Naive thymus-derived CD4-positive, alpha-beta T cell (primary cell): ENCODE measurements at regions of chr6 and their contacts with region 1.

Region 1: GRCh38 chr6:52995913-52996645 is 995 bp upstream of the GSTA4 start:
- DNase-seq: peak in 5 of 9 donors; percentile 21 to 43 (median 35)
- ATAC-seq: no peak
- H3K4me3 ChIP-seq: peak overlapping the region; percentile 83
- H3K4me3 Mint-ChIP-seq: peak overlapping the region; percentile 87 to 98 (median 94)
- H3K27ac ChIP-seq: peak overlapping the region; percentile 43
- H3K27ac Mint-ChIP-seq: peak overlapping the region; percentile 97 to 100 (median 99)
- H3K4me1 ChIP-seq: peaks cover 4 to 5% of the 10 kb centered on the region in 2 donors
- H3K4me1 Mint-ChIP-seq: peaks cover 10 to 37% (median 29%) of the 10 kb centered on the region in 7 donors
- H3K27me3 ChIP-seq: no peaks in the 10 kb centered on the region
- H3K27me3 Mint-ChIP-seq: peaks cover 0 to 10% (median 0%) of the 10 kb centered on the region in 5 donors

Region 2: GRCh38 chr6:51213811-51214210 is 1782.3 kb before region 1 on chr6:
- CTCF ChIA-PET with region 1: no interaction called
- POLR2A ChIA-PET with region 1: no interaction called
- intact Hi-C with region 1: no loop called
- DNase-seq: no peak
- ATAC-seq: no peak
- H3K4me3 ChIP-seq: no peak overlapping the region
- H3K4me3 Mint-ChIP-seq: no peak overlapping the region
- H3K27ac ChIP-seq: no peak overlapping the region
- H3K27ac Mint-ChIP-seq: no peak overlapping the region
- H3K4me1 ChIP-seq: no peaks in the 10 kb centered on the region
- H3K4me1 Mint-ChIP-seq: no peaks in the 10 kb centered on the region
- H3K27me3 ChIP-seq: no peaks in the 10 kb centered on the region
- H3K27me3 Mint-ChIP-seq: no peaks in the 10 kb centered on the region

Region 3: GRCh38 chr6:52399511-52400312 is 596.4 kb before region 1 on chr6:
- CTCF ChIA-PET with region 1: no interaction called
- POLR2A ChIA-PET with region 1: no interaction called
- intact Hi-C with region 1: loop called (anchors 5 to 10 kb)
- DNase-seq: peak in 7 of 9 donors; percentile 21 to 60 (median 48)
- ATAC-seq: peak; percentile 58
- H3K4me3 ChIP-seq: no peak overlapping the region
- H3K4me3 Mint-ChIP-seq: peak overlapping the region; percentile 26 to 84 (median 74)
- H3K27ac ChIP-seq: peak overlapping the region; percentile 89
- H3K27ac Mint-ChIP-seq: peak overlapping the region; percentile 91 to 100 (median 96)
- H3K4me1 ChIP-seq: peaks cover 48 to 70% of the 10 kb centered on the region in 2 donors
- H3K4me1 Mint-ChIP-seq: peaks cover 40 to 96% (median 77%) of the 10 kb centered on the region in 7 donors
- H3K27me3 ChIP-seq: no peaks in the 10 kb centered on the region
- H3K27me3 Mint-ChIP-seq: peaks cover 0 to 3% (median 0%) of the 10 kb centered on the region in 5 donors

Region 4: GRCh38 chr6:52664186-52664990 is 331.7 kb before region 1 on chr6:
- CTCF ChIA-PET with region 1: no interaction called
- POLR2A ChIA-PET with region 1: no interaction called
- intact Hi-C with region 1: loop called (anchors 5 kb)
- DNase-seq: peak in 8 of 9 donors; percentile 22 to 73 (median 34)
- ATAC-seq: peak; percentile 78
- H3K4me3 ChIP-seq: peak overlapping the region; percentile 68
- H3K4me3 Mint-ChIP-seq: no peak overlapping the region
- H3K27ac ChIP-seq: peak overlapping the region; percentile 28
- H3K27ac Mint-ChIP-seq: no peak overlapping the region
- H3K4me1 ChIP-seq: peaks cover 0 to 5% of the 10 kb centered on the region in 2 donors
- H3K4me1 Mint-ChIP-seq: peaks cover 0 to 6% (median 0%) of the 10 kb centered on the region in 7 donors
- H3K27me3 ChIP-seq: peaks cover 0 to 3% of the 10 kb centered on the region in 2 donors
- H3K27me3 Mint-ChIP-seq: no peaks in the 10 kb centered on the region

Region 5: GRCh38 chr6:53189554-53189953 is 193.5 kb after region 1 on chr6:
- CTCF ChIA-PET with region 1: no interaction called
- POLR2A ChIA-PET with region 1: no interaction called
- intact Hi-C with region 1: loop called in 1 of 2 experiments (anchors 2 kb)
- DNase-seq: no peak
- ATAC-seq: no peak
- H3K4me3 ChIP-seq: no peak overlapping the region
- H3K4me3 Mint-ChIP-seq: no peak overlapping the region
- H3K27ac ChIP-seq: no peak overlapping the region
- H3K27ac Mint-ChIP-seq: no peak overlapping the region
- H3K4me1 ChIP-seq: peaks cover 12 to 26% of the 10 kb centered on the region in 2 donors
- H3K4me1 Mint-ChIP-seq: peaks cover 8 to 39% (median 29%) of the 10 kb centered on the region in 7 donors
- H3K27me3 ChIP-seq: no peaks in the 10 kb centered on the region
- H3K27me3 Mint-ChIP-seq: peaks cover 0 to 2% (median 0%) of the 10 kb centered on the region in 5 donors

Region 6: DNA sequence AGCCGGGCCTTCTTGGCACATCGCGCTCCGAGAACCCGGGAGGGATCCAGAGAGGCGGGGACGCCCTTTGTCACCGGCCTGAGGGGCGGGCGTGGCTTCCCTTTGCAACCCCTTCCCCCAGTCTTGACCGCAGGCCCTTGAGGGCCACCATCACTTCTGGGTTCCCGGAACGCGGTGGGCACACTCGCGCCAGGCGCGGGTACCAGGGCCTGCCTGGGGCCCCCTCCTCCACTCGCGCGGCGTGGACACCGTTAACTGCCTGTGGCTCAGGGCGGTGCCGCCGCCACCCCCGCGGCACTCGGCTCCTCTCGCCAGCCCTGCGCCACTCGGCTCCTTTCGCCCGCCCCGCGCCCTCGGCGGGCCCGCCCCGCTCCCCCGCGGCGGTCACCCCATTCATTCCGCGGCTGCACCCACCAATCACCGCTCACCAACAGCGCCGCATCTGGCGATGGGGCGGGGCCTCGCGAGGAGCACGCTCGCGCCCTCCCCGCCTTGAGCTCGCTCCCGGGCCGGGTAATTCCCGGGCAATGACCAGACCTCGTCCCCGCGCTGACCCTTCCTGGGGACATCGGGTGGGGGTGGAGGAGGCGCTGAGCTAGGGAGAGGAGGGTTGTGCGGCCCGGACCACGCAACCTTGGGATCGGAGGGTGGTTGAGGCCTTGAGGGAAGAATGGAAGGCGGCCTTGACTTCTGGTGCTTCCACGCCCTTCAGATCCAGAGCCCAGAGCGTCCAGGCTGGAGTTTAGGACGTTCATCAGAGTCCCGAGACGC is 363.2 kb after region 1 on chr6:
- CTCF ChIA-PET with region 1: no interaction called
- POLR2A ChIA-PET with region 1: no interaction called
- intact Hi-C with region 1: loop called in 1 of 2 experiments (anchors 5 kb)
- DNase-seq: peak; percentile 79 to 96 (median 89)
- ATAC-seq: peak; percentile 91
- H3K4me3 ChIP-seq: peak overlapping the region; percentile 76
- H3K4me3 Mint-ChIP-seq: peak overlapping the region; percentile 78 to 94 (median 90)
- H3K27ac ChIP-seq: peak overlapping the region; percentile 88
- H3K27ac Mint-ChIP-seq: peak overlapping the region; percentile 87 to 99 (median 98)
- H3K4me1 ChIP-seq: peaks cover 33 to 41% of the 10 kb centered on the region in 2 donors
- H3K4me1 Mint-ChIP-seq: peaks cover 24 to 54% (median 43%) of the 10 kb centered on the region in 7 donors
- H3K27me3 ChIP-seq: no peaks in the 10 kb centered on the region
- H3K27me3 Mint-ChIP-seq: peaks cover 0 to 4% (median 0%) of the 10 kb centered on the region in 5 donors

Region 7: DNA sequence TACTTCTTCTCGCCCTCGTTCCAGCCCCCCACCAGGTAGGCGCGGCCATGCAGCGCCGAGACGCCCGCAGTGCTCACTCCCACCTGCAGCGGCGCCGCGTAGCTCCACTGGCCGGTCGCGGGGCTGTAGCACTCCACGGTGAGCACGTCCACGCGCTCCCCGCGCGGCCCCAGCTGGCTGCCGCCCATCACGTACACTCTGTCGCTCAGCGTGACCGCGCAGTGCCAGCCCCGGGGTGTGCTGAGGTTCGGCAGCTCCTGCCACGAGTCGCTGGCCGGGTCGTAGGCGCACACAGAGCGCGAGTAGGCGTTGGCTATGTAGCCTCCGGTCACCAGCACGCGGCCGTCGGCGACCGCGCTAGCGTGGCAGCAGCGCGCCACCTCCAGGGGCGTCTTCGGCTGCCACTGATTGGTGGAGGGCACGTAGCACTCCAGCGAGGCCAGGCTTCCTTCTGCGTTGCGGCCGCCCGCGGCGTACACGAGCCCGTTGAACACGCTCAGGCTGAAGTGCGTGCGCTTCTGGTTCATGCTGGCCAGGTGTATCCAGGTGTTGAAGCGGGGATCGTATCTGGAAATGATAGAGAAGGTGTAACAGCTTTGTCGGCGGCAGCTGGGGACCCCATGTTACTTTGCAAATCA is 655.8 kb after region 1 on chr6:
- CTCF ChIA-PET with region 1: no interaction called
- POLR2A ChIA-PET with region 1: no interaction called
- intact Hi-C with region 1: loop called (anchors 2 to 10 kb)
- DNase-seq: peak; percentile 62 to 82 (median 74)
- ATAC-seq: peak; percentile 94
- H3K4me3 ChIP-seq: peak overlapping the region; percentile 91
- H3K4me3 Mint-ChIP-seq: peak overlapping the region; percentile 90 to 99 (median 94)
- H3K27ac ChIP-seq: peak overlapping the region; percentile 45
- H3K27ac Mint-ChIP-seq: peak overlapping the region; percentile 65 to 93 (median 84)
- H3K4me1 ChIP-seq: peaks cover 9 to 15% of the 10 kb centered on the region in 2 donors
- H3K4me1 Mint-ChIP-seq: peaks cover 14 to 34% (median 21%) of the 10 kb centered on the region in 7 donors
- H3K27me3 ChIP-seq: no peaks in the 10 kb centered on the region
- H3K27me3 Mint-ChIP-seq: peaks cover 0 to 35% (median 0%) of the 10 kb centered on the region in 5 donors